Caco-2 (cell line): ENCODE measurements at regions of chr1 and their contacts with region 1.

Region 1: DNA sequence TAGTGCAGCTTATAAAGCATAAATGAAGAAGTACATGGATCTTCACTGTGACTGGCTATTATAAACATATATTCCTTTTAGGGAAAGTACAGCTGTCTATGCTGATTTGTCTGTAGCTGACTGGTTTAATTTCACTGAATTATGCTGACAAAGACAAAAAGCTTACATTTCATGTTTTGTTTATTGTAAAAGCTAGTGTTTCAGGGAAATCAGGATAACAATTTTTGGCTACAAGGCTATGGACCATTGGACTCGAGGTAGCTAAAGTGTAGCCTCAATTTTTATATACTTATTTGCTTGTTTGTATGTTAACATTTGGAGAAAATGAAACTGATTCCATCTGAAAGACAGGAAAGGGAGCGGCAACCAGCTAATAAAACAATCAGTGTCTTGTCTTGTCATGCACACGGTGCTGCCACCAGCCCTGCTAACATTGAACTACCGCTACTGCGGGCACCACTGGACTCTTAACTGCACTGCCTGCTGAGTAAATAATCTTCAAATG is 480.2 kb downstream of the COL11A1 start:
- DNase-seq: no peak
- H3K4me3 ChIP-seq: no peak overlapping the region
- H3K4me3 Mint-ChIP-seq: no peak overlapping the region
- H3K27ac Mint-ChIP-seq: no peak overlapping the region
- H3K4me1 ChIP-seq: no peaks in the 10 kb centered on the region
- H3K4me1 Mint-ChIP-seq: no peaks in the 10 kb centered on the region
- H3K27me3 ChIP-seq: no peaks in the 10 kb centered on the region
- H3K27me3 Mint-ChIP-seq: no peaks in the 10 kb centered on the region
- CTCF ChIP-seq: no peak

Region 2: GRCh38 chr1:102578804-102579203 is 49.4 kb before region 1 on chr1:
- CTCF ChIA-PET with region 1: no interaction called
- POLR2A ChIA-PET with region 1: no interaction called
- intact Hi-C with region 1: no loop called
- DNase-seq: no peak
- H3K4me3 ChIP-seq: no peak overlapping the region
- H3K4me3 Mint-ChIP-seq: no peak overlapping the region
- H3K27ac Mint-ChIP-seq: no peak overlapping the region
- H3K4me1 ChIP-seq: no peaks in the 10 kb centered on the region
- H3K4me1 Mint-ChIP-seq: no peaks in the 10 kb centered on the region
- H3K27me3 ChIP-seq: no peaks in the 10 kb centered on the region
- H3K27me3 Mint-ChIP-seq: no peaks in the 10 kb centered on the region
- CTCF ChIP-seq: no peak

Region 3: DNA sequence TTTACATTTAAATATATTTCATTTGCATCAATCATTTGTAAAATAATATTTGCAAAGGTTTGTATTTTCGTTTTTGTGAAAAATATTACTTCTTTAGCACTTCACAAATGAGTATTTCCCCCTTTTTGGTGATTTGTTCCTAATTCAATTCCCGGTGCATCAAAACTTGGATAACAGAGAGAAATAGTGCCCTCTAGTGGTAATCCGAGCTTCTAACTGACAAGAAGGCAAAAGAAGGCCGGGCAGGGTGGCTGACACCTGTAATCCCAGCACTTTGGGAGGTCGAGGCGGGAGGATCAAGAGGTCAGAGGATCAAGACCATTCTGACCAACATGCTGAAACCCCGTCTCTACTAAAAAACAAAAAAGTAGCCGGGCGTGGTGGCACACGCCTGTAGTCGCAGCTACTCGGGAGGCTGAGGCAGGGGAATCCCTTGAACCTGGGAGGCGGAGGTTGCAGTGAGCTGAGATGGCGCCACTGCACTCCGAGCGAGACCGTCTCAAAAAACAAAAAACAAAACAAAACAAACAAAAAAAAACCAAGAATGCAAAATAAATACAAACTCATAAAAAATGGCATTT is 342.4 kb after region 1 on chr1:
- CTCF ChIA-PET with region 1: no interaction called
- POLR2A ChIA-PET with region 1: no interaction called
- intact Hi-C with region 1: loop called (anchors 10 kb)
- DNase-seq: peak in 1 of 2 experiments; percentile 47
- H3K4me3 ChIP-seq: no peak overlapping the region
- H3K4me3 Mint-ChIP-seq: no peak overlapping the region
- H3K27ac Mint-ChIP-seq: no peak overlapping the region
- H3K4me1 ChIP-seq: no peaks in the 10 kb centered on the region
- H3K4me1 Mint-ChIP-seq: no peaks in the 10 kb centered on the region
- H3K27me3 ChIP-seq: no peaks in the 10 kb centered on the region
- H3K27me3 Mint-ChIP-seq: no peaks in the 10 kb centered on the region
- CTCF ChIP-seq: peak; percentile 43 to 47